ENCODE measurements at regions of chr1 and their contacts with region 1.

Region 1: DNA sequence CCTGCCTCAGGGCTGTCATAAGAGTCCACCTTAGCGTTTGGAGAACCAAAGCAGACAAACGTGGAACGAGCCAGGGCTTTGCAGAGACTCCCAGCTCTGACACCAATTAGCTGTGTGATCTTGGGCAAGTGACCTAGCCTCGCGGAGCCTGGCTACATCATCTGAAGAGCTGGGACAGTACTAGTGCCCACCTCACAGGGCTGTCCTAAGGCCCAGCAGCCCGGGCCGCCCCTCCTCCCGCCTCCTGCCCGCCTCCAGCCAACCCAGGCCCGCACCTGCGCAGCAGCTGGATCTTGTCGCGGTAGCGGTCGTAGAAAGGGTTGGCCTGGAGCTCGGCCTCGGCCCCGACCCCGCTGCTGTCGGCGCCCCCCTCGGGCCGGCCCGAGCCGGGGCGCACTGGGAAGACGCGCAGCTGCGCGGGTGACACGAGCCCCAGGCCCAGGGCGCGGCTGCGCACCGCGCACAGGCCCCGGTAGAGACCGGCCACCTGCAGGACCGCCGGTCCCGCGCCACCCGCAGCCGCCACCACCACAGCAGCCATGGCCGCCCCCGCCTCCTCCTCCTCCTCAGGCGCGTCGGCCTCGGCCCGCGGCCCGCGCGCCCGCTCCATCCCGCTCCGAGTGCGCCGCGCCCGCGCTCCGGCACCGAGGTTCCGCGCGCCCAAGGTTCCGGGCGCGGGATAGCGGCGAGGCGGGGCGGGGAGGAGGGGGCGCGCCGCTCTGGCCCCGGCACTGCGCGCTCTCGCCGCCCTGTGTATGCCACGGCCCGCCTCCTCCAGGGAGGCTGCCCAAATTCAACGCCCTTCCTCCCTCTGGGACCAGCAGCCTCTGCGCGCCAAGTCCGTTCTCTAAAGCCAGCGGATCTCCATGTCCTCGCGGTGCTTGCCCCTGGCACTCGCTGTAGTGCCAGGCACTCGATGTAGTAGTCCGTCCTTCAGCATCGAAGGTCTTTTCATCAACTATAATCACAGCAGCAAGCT is at the start of gene ATPAF1:
- DNase-seq: peak; percentile 61
- H3K4me3 Mint-ChIP-seq: peak within 1 kb of the TSS; percentile 82
- H3K27ac Mint-ChIP-seq: peak within 1 kb of the TSS; percentile 46
- H3K4me1 Mint-ChIP-seq: peaks cover 17% of the 10 kb centered on the region
- H3K27me3 Mint-ChIP-seq: no peaks in the 10 kb centered on the region
- total RNA-seq, gene ATPAF1: 42.7 TPM in 2 replicates

Region 2: DNA sequence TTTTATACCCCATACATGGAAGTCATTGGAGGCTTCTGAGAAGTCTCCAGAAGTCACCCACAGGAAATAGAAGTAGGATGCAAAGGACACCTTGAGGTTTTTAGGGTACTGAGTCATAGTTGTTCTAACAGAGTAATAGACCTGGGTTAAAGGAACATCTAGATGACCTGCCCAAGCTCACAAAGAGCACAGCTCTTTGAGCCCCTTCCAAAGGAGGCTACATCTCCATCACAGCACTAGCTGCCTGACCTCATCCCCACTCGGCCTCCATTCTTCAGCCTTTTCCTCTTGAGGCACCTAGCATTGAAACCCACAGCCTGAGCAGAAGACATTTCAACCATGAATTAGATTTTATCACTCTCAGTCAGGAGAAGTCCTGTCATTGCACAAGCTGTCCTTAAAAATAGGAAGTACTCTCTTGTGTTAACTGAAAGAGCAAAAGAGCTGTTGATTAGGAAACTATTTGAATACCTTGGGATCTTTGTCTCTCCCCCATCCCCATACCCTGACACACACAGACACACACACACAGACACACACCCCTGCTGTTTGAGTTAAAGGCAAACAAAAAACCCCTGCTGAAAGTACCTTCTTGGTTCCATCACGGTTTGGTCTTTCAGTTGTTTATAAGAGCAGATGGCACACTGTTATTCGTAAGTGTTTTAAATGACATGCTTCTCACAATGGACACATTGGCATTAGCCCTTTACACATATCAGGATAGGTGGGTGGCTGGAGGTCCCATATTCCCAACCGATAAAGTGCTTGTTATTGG is 86.2 kb before region 1 on chr1:
- intact Hi-C with region 1: loop called (anchors 5 kb)
- DNase-seq: peak; percentile 32
- H3K4me3 Mint-ChIP-seq: peak overlapping the region; percentile 60
- H3K27ac Mint-ChIP-seq: peak overlapping the region; percentile 94
- H3K4me1 Mint-ChIP-seq: peaks cover 49% of the 10 kb centered on the region
- H3K27me3 Mint-ChIP-seq: no peaks in the 10 kb centered on the region

Region 3: DNA sequence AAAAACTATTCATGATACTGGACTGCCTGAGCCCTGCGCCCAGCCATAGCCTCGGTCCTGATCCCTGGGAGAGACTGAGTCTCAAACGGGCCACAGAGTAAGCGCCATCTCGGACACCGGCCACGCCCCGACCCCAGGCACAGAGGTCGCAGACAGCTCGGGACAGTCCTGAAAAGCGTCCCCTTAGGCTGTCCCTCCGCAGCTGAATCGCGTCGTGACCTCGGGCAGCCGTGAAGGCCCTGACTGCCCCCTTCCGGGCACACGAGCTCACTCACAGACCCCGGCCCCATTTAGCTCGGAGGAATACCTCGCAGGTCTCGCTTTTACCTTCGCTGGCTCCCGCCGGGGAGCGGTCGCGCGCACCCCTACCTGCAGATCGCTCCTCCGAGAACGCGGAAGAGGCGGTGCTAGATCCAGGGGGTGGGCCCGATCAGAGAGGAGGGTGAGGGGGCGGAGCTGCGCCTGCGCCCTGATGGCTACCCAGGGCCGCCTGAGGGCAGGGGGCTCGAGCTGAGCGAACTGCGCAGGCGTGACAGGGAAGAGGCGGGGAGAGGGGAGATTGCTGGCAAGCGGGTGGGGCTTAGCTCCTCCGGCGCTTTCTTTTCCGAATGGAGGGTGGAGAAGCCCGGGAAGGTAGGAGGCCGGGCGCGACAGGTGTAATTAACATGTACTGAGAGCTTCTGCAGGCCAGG is 64.1 kb before region 1 on chr1 and contains the start of gene MKNK1:
- intact Hi-C with region 1: loop called (anchors 1 kb)
- DNase-seq: peak; percentile 97
- H3K4me3 Mint-ChIP-seq: peak within 1 kb of the TSS; percentile 87
- H3K27ac Mint-ChIP-seq: peak within 1 kb of the TSS; percentile 75
- H3K4me1 Mint-ChIP-seq: peaks cover 54% of the 10 kb centered on the region
- H3K27me3 Mint-ChIP-seq: no peaks in the 10 kb centered on the region
- total RNA-seq, gene MKNK1: 45.2 and 48.1 TPM in 2 replicates

Region 4: GRCh38 chr1:46616277-46617107 is 51.6 kb before region 1 on chr1 and contains the start of gene MOB3C:
- intact Hi-C with region 1: loop called (anchors 5 kb)
- DNase-seq: peak; percentile 54
- H3K4me3 Mint-ChIP-seq: peak within 1 kb of the TSS; percentile 87
- H3K27ac Mint-ChIP-seq: peak within 1 kb of the TSS; percentile 92
- H3K4me1 Mint-ChIP-seq: peaks cover 69% of the 10 kb centered on the region
- H3K27me3 Mint-ChIP-seq: no peaks in the 10 kb centered on the region
- total RNA-seq, gene MOB3C: 16.0 and 17.5 TPM in 2 replicates

Region 5: GRCh38 chr1:46653405-46653958 is 14.6 kb before region 1 on chr1:
- intact Hi-C with region 1: loop called (anchors 2 kb)
- DNase-seq: no peak
- H3K4me3 Mint-ChIP-seq: no peak overlapping the region
- H3K27ac Mint-ChIP-seq: peak overlapping the region; percentile 70
- H3K4me1 Mint-ChIP-seq: peaks cover 25% of the 10 kb centered on the region
- H3K27me3 Mint-ChIP-seq: no peaks in the 10 kb centered on the region

Region 6: GRCh38 chr1:46718727-46719622 is 50.9 kb after region 1 on chr1 and contains the start of gene EFCAB14:
- intact Hi-C with region 1: loop called (anchors 5 kb)
- DNase-seq: peak; percentile 98
- H3K4me3 Mint-ChIP-seq: peak within 1 kb of the TSS; percentile 95
- H3K27ac Mint-ChIP-seq: peak within 1 kb of the TSS; percentile 92
- H3K4me1 Mint-ChIP-seq: peaks cover 36% of the 10 kb centered on the region
- H3K27me3 Mint-ChIP-seq: no peaks in the 10 kb centered on the region
- total RNA-seq, gene EFCAB14: 69.1 and 71.3 TPM in 2 replicates